Activated CD8-positive, alpha-beta memory T cell treated with anti-CD3 and anti-CD28 coated beads, Interleukin-2, amount 10 ng/mL, durations not matched to agents 7 days and 5 days (primary cell): ENCODE measurements at regions of chr16 and their contacts with region 1.

Region 1: GRCh38 chr16:74309789-74310781 is 13.5 kb downstream of the PSMD7 start:
- DNase-seq: no peak
- ATAC-seq: peak; percentile 48
- H3K4me3 Mint-ChIP-seq: no peak overlapping the region
- H3K27ac Mint-ChIP-seq: no peak overlapping the region
- H3K4me1 Mint-ChIP-seq: peaks cover 15% of the 10 kb centered on the region
- H3K27me3 Mint-ChIP-seq: no peaks in the 10 kb centered on the region

Region 2: GRCh38 chr16:74261068-74261467 is 49.0 kb before region 1 on chr16:
- CTCF ChIA-PET with region 1: no interaction called
- DNase-seq: no peak
- ATAC-seq: no peak
- H3K4me3 Mint-ChIP-seq: no peak overlapping the region
- H3K27ac Mint-ChIP-seq: no peak overlapping the region
- H3K4me1 Mint-ChIP-seq: no peaks in the 10 kb centered on the region
- H3K27me3 Mint-ChIP-seq: peaks cover 3% of the 10 kb centered on the region

Region 3: DNA sequence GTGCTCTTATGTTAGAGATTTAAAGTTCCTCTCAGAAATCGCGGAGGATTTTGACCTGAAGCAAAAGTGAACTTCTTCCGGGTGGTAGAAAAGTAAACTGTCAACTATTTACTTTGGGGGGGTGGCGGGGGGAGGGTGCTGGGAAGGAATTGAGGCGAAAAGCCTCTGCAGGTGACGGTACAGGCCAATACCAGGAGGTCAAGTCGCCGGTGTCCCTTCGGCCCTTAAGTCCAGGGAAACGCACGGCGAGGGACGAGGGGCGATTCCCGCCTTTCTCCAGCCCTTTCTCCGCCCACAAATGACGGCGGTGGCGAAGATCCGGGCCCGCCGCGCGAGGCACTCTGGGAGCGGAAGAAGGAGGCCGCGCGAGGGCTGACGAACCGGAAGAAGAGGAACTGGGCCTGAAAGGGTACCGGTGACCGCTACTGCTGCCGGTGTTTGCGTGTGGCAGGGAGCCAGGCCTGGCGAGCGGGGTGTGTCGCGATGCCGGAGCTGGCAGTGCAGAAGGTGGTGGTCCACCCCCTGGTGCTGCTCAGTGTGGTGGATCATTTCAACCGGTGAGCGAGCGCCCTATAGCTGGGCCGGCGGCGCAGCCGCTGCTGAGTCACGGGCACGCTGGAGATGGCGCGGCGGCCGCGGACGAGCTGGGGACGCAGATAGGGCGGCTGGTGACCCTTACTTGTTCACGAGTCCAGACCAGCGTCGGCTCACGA is 13.5 kb before region 1 on chr16 and contains the start of gene PSMD7:
- CTCF ChIA-PET with region 1: interaction called, 32 read pairs
- DNase-seq: peak; percentile 94
- ATAC-seq: peak; percentile 92
- H3K4me3 Mint-ChIP-seq: peak within 1 kb of the TSS; percentile 88
- H3K27ac Mint-ChIP-seq: peak within 1 kb of the TSS; percentile 93
- H3K4me1 Mint-ChIP-seq: peaks cover 41% of the 10 kb centered on the region
- H3K27me3 Mint-ChIP-seq: no peaks in the 10 kb centered on the region
- total RNA-seq, gene PSMD7: 91.6 to 110 TPM

Region 4: GRCh38 chr16:74320707-74321106 is 10.6 kb after region 1 on chr16:
- CTCF ChIA-PET with region 1: interaction called, 10 read pairs
- DNase-seq: no peak
- ATAC-seq: no peak
- H3K4me3 Mint-ChIP-seq: no peak overlapping the region
- H3K27ac Mint-ChIP-seq: no peak overlapping the region
- H3K4me1 Mint-ChIP-seq: no peaks in the 10 kb centered on the region
- H3K27me3 Mint-ChIP-seq: no peaks in the 10 kb centered on the region